Motor neuron (in vitro differentiated cells): ENCODE measurements at regions of chr19 and their contacts with region 1.

Region 1: GRCh38 chr19:18322759-18323460 is at the start of gene LSM4:
- ATAC-seq: peak; percentile 90 to 96 (median 95)
- H3K4me3 ChIP-seq: peak within 1 kb of the TSS; percentile 54 to 89 (median 59)
- H3K27ac ChIP-seq: peak within 1 kb of the TSS; percentile 80 to 82
- H3K4me1 ChIP-seq: peaks cover 17% of the 10 kb centered on the region in 2 donors
- total RNA-seq, gene LSM4: 87.3 to 240 (median 151) TPM

Region 2: DNA sequence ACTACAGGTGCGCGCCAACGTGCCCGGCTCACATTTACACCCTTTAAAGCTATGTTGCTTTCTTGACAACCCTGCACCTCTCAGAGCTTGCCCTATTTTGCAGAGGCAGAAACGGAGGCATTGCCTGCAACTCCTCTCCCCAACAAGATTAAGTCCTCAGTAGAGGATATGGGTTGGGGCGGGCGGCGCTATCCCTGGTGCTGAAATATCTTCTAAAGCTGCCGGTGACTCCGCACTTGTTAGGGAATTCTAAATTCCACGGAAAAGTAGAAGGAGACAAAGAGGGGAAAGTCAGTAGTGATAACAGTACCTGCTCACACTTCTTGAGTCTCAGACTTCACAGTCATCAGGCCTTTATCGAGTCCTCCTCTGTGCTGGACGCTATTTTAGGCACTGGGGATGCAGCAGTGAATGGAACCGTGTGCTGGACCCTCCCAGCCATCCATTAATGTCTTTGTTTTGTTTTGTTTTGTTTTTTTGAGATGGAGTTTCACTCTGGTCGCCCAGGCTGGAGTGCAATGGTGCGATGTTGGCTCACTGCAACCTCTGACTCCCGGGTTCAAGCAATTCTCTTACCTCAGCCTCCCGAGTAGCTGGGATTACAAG is 433.2 kb before region 1 on chr19:
- in situ Hi-C with region 1: no loop called
- ATAC-seq: peak in 6 of 8 experiments; percentile 30 to 86 (median 57)
- H3K4me3 ChIP-seq: no peak overlapping the region
- H3K27ac ChIP-seq: no peak overlapping the region
- H3K4me1 ChIP-seq: no peaks in the 10 kb centered on the region

Region 3: GRCh38 chr19:18179957-18180356 is 143.0 kb before region 1 on chr19:
- in situ Hi-C with region 1: no loop called
- ATAC-seq: no peak
- H3K4me3 ChIP-seq: no peak overlapping the region
- H3K27ac ChIP-seq: no peak overlapping the region
- H3K4me1 ChIP-seq: no peaks in the 10 kb centered on the region

Region 4: GRCh38 chr19:18279516-18280273 is 43.2 kb before region 1 on chr19:
- in situ Hi-C with region 1: loop called in 2 of 9 experiments (anchors 10 kb)
- ATAC-seq: peak; percentile 1 to 14 (median 6)
- H3K4me3 ChIP-seq: peak overlapping the region; percentile 70 to 93 (median 84)
- H3K27ac ChIP-seq: peak overlapping the region; percentile 87 to 94
- H3K4me1 ChIP-seq: peaks cover 12 to 26% of the 10 kb centered on the region in 2 donors